ENCODE measurements at regions of chr2 and their contacts with region 1.

Region 1: DNA sequence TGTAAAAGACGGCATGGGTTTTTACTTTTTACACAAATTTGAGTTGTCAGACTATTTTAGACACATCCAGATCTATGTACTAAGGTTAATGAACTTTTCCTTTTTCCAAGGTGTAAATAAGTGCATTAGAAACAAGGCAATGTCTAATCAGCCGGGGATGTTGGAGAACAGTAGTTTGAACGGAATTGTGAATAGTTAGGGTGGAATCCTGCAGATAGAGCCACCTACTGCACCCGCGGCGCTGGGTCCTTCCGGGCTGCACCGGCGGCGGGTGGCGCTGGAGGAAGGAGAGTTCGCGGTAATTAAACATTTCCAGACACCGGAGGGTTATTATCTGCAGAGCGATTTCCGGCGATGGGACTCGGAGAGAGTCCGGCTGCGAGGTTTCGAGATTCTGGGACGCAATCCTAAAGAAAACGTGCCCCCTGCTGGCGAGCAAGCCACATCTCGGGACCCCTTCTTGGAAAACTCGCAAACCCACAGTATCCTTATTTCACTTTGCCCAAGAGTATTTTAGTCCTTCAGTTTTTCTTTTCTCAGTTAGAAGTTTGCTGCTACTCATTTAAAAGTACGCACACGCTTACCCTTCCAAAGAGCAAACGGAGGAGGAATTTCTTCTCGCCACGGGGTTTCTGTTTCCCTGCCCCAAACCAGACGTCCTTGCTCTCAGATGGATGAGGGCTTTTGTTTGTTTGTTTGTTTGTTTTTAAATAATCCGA is 4.5 kb upstream of the OSR1 start:
- DNase-seq: peak; percentile 82
- ATAC-seq: peak; percentile 40 to 54

Region 2: GRCh38 chr2:18435421-18436037 is 927.4 kb before region 1 on chr2:
- intact Hi-C with region 1: loop called in 1 of 2 experiments (anchors 10 kb)
- DNase-seq: no peak
- ATAC-seq: peak; percentile 44 to 46

Region 3: DNA sequence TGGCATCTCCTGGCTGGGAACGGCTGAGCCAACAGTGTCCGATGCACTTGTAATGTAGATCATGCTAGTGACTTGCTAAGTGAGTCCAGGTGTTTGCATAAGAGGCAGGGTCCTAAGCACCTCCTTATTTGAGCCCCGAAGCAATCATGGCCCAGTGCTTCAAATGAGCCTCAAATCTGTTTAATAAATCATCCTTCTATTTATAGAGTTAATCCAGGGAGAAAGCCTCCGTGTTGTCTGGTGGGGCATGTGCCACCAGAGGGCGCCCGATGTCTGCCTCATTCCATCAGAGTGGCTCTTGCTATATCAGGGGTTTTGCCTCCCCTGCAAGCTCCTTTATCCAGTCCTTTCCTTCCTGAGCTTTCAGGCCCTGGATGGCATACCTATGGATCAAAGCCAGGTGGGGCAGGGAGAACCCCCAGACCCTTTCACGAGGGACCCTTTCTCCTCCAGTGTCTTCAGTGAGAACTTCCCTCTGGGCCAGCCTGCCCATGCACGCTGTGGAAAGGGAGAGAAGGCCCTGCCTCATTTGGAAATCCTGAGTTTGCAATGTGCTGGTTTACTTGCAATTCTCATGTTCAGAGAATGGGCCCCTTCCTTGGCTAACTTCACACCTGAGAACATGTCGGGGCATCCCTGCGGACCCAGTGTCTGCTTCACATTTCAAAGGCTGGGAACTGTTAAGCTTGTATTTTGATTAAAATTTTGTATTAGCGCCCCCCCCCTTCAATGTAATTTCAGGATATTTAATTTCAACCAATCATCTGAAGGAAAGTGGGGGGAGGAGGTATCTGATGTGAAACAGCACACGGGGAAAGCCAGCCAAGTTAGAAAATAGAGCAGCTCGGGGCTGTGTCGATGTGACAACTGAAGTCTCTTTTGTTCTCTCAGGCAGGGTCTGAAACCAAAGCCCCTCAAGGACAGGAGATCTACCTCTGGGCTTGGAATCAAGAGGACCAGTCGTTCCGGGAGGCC is 842.2 kb before region 1 on chr2:
- intact Hi-C with region 1: loop called in 1 of 2 experiments (anchors 1 kb)
- DNase-seq: peak; percentile 86
- ATAC-seq: peak; percentile 83 to 84

Region 4: GRCh38 chr2:18749912-18750526 is 612.9 kb before region 1 on chr2:
- intact Hi-C with region 1: loop called (anchors 5 kb)
- DNase-seq: peak; percentile 47
- ATAC-seq: peak in 1 of 2 donors; percentile 60

Region 5: DNA sequence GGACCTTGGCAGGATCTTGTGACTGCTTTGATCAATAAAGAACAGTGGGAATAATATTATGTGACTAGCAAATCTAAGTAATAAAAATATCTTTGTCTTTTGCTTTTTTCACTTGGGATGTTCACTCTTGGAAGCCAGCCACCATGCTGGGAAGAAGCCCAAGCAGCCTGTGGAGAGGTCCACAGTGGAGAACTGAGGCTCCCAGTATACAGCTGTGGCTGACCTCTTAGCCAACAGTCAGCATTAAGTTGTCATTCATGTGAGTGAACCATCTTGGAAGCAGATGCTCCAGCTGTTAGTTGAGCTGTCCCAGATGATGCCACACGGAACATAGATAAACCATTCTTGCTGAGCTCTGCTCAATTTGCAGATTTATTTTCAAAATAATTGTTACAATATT is 164.5 kb before region 1 on chr2:
- intact Hi-C with region 1: no loop called
- DNase-seq: no peak
- ATAC-seq: no peak

Region 6: GRCh38 chr2:19632403-19632991 is 269.6 kb after region 1 on chr2:
- intact Hi-C with region 1: loop called in 1 of 2 experiments (anchors 5 kb)
- DNase-seq: peak; percentile 59
- ATAC-seq: peak; percentile 95 to 96

Region 7: GRCh38 chr2:19667085-19667484 is 304.2 kb after region 1 on chr2:
- intact Hi-C with region 1: no loop called
- DNase-seq: no peak
- ATAC-seq: no peak

Region 8: DNA sequence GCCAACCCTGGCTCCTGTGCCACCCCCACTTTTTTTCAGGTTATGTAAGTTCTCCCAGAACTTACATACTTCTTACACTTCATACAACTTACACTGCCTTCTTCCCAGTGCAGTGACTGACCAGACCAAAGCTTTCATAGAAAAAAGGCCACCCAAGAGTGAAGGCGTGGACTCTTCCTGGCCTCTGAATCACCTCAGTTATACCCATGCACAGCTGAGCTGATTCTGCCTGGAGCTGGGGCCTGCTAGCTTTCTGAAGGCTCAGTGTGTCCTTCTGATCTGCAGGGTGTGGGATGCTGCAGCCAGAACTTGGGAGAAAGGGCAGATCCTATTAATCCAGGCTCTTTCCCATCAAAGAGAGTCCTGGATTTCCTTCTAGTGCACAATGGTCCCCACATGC is 322.8 kb after region 1 on chr2:
- intact Hi-C with region 1: loop called in 1 of 2 experiments (anchors 5 kb)
- DNase-seq: no peak
- ATAC-seq: no peak

Region 9: DNA sequence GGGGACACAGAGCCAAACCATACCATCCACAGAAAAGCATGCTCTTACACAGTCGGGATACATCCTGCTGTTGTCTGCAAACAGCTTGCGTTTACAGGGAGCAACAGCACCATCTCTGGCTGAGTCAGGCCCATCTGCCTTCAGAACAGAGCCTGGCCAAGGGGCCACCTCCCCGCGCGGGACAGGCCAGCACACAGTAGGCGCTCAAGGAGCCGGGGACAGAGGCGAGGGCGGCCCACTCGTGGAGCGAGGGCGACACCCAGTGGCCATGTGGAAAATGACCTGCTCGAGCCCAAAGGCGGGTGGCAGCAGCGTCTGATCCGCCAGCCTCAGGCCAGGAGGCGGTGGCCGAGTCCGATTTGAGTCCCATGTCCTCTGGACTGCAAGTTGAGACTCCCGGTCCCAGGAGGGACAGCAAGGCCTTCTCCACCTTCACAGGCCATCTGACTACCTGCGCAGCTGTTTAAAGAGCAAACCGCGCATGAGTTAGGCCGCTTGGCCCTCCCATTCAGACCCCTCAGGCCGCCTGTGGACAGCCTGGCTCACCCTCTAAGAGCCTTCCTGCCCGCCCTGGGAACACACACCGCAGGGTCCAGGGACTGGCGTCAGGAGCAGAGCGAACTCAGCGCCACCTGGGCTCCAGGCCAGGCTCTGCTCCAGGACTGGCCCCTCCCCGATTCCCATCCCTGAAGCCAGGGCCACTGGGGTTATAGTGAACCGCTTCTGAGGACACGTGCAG is 500.6 kb after region 1 on chr2:
- intact Hi-C with region 1: loop called (anchors 5 to 10 kb)
- DNase-seq: peak; percentile 74
- ATAC-seq: peak; percentile 85 to 88

Measured in left cardiac atrium (tissue), 4 donors.